ENCODE measurements at regions of chr14 and their contacts with region 1.

Region 1: DNA sequence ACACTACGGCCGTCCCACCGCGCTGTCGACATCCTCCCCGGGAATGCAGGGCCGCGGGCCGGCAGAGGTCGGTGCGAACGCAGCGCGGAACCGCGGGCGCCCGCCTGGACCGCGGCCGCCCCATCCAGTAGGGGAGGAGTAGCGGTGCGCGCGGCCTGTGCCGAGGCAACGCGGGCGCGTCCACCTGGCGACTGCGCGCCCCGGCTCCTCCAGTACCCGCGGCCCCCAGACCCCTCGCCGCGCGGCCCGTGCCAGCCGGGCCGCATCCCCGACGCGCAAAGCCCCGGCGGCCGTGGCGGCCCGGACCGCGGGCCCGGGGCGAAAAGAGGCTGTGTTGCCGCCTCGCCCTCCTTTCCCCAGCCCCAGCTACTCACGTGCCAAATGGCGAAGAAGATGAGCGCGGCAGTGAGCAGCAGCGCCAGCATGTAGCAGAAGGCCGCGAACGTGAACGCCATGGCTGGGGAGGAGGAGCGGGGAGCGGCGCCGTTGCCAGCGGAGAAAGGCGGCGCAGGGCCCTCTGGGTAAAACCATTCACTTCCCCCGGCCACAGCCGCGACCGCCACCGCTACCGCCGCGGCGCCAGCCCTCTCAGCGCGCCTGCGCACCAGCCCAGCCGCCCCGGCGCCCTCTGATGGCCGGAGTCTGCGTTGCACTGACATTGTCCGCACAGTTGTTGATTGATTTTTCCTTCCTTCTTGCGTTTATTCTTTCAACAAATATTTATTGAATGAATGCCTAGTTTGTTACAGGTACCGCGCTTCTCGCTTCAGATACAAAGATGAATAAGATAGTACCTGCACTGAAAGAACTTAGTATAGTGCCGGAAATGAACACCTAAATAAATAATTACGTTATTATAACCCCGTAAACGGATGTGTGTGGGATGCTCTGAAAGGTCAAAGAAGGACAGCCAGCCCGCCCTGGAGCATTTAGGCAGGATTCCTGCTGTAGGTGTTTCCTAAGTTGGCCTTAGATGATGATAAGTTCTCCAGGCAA is at the start of gene CNIH1:
- DNase-seq: peak; percentile 99
- H3K4me3 Mint-ChIP-seq: peak within 1 kb of the TSS; percentile 95
- H3K27ac Mint-ChIP-seq: peak within 1 kb of the TSS; percentile 94
- H3K4me1 Mint-ChIP-seq: peaks cover 42% of the 10 kb centered on the region
- H3K27me3 Mint-ChIP-seq: peaks cover 2% of the 10 kb centered on the region
- total RNA-seq, gene CNIH1: 113 and 116 TPM in 2 replicates

Region 2: DNA sequence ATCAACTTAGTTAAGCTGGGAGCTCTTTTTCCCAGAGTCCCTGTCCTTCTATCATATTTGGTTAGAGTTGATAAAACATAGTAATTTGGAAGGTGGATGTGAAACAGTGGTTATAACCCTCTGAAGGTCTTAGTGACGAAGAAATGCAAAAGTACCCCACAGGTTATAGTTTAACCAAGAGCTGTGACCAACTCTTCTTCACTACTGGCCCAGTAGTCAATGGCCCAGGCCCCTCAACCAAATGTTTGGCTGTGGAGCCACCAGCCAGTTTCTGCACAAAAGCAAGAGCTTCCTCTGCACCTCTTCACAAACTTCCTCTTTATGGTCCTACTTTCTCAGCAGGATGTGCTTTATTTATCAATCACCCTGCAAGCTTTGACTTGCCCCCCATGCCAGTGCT is 617.1 kb before region 1 on chr14:
- intact Hi-C with region 1: no loop called
- DNase-seq: no peak
- H3K4me3 Mint-ChIP-seq: no peak overlapping the region
- H3K27ac Mint-ChIP-seq: no peak overlapping the region
- H3K4me1 Mint-ChIP-seq: no peaks in the 10 kb centered on the region
- H3K27me3 Mint-ChIP-seq: no peaks in the 10 kb centered on the region

Region 3: GRCh38 chr14:54396493-54397335 is 44.5 kb before region 1 on chr14 and contains the start of gene CDKN3:
- intact Hi-C with region 1: loop called (anchors 1 kb)
- DNase-seq: peak; percentile 100
- H3K4me3 Mint-ChIP-seq: peak within 1 kb of the TSS; percentile 92
- H3K27ac Mint-ChIP-seq: peak within 1 kb of the TSS; percentile 86
- H3K4me1 Mint-ChIP-seq: peaks cover 26% of the 10 kb centered on the region
- H3K27me3 Mint-ChIP-seq: peaks cover under 1% of the 10 kb centered on the region
- total RNA-seq, gene CDKN3: 42.5 and 50.8 TPM in 2 replicates

Region 4: GRCh38 chr14:54427871-54428270 is 13.3 kb before region 1 on chr14:
- intact Hi-C with region 1: loop called (anchors 1 kb)
- DNase-seq: no peak
- H3K4me3 Mint-ChIP-seq: no peak overlapping the region
- H3K27ac Mint-ChIP-seq: peak overlapping the region; percentile 3
- H3K4me1 Mint-ChIP-seq: peaks cover 20% of the 10 kb centered on the region
- H3K27me3 Mint-ChIP-seq: no peaks in the 10 kb centered on the region

Region 5: DNA sequence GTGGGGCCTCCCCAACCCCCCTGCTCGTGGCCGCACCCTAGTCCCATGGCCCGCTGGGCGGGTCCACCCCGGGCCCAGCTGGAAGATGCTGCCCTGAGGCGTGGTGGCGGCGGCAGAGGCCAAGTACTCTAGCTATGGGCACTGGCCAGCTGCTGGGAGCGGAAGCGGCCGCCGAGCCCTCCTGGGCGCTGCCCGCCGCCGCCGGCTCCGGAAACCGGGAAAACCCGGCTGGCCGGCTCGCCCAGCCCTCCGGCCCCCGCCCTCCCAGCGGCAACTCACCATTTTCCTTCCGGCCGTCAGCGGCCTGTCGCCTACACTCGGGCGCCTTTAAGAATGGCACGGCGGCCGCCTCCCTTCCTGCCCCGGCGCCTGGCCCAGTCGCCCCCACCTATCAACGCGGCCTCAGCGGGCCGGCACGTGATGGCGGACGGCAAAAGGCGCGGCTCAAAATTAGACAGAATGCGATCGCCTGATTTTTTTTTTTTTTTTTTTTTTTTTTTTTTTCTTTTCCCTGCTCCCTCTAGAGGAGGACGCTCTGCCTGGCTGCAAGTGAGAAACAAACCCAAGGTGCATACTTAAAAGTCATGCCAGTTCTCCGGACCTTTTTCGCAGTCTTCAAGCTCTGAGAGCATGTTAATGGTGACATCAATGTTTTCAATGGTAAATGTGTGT is 47.6 kb after region 1 on chr14 and contains the start of gene GMFB:
- intact Hi-C with region 1: loop called (anchors 1 kb)
- DNase-seq: peak; percentile 96
- H3K4me3 Mint-ChIP-seq: peak within 1 kb of the TSS; percentile 89
- H3K27ac Mint-ChIP-seq: peak within 1 kb of the TSS; percentile 86
- H3K4me1 Mint-ChIP-seq: peaks cover 47% of the 10 kb centered on the region
- H3K27me3 Mint-ChIP-seq: peaks cover 3% of the 10 kb centered on the region
- total RNA-seq, gene GMFB: 40.9 and 41.1 TPM in 2 replicates

Region 6: DNA sequence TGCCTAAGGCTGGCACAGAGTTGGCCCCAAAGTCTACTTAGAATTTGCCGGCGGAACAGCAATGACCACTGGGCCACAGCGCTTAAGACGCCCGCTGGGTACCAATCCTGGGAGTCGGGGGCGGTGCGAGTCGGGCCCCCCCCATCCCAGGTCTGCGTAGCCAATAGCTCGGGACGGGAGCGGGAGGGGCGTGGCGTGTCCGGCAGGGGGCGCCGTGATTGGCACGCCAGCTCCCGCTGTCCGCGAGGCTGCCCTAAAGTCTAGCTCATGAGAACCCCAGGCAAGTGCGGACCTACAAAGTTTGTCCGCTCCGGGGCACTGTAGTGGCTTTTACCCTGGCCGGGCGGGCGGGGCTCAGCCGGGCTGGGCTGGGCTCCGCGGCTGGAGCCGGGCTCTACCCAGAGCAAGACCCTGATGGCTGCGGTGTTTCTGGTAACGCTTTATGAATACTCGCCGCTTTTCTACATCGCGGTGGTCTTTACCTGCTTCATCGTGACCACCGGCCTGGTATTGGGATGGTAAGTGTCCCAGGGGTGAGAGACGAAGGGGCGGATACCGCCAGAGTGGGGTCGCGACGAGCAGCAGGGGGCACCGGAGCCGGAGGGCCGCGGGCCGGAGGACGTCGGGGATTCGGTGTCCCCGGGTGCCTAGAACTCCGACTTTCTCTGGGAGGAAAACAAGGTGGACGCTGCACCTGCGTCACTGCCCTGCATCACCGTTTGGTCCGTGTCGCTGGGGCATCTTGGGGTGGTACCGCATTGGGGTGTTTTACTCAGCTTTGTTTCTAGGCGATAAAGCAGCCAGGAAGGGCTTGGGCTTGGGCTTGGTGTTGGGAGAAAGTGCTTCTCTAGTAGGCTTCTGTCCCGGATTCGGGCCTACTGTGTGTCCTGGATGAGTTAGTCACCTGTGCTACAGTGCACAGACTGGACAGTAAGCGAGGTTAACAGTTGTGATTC is 68.7 kb after region 1 on chr14 and contains the start of gene CGRRF1:
- intact Hi-C with region 1: loop called (anchors 1 kb)
- DNase-seq: peak; percentile 99
- H3K4me3 Mint-ChIP-seq: peak within 1 kb of the TSS; percentile 96
- H3K27ac Mint-ChIP-seq: peak within 1 kb of the TSS; percentile 88
- H3K4me1 Mint-ChIP-seq: peaks cover 29% of the 10 kb centered on the region
- H3K27me3 Mint-ChIP-seq: peaks cover 8% of the 10 kb centered on the region
- total RNA-seq, gene CGRRF1: 7.8 and 11.9 TPM in 2 replicates

Region 7: GRCh38 chr14:54737132-54737711 is 296.1 kb after region 1 on chr14:
- intact Hi-C with region 1: loop called (anchors 1 kb)
- DNase-seq: no peak
- H3K4me3 Mint-ChIP-seq: peak overlapping the region; percentile 63
- H3K27ac Mint-ChIP-seq: peak overlapping the region; percentile 76
- H3K4me1 Mint-ChIP-seq: peaks cover 57% of the 10 kb centered on the region
- H3K27me3 Mint-ChIP-seq: peaks cover 5% of the 10 kb centered on the region

Region 8: GRCh38 chr14:55102141-55102621 is 661.0 kb after region 1 on chr14:
- intact Hi-C with region 1: no loop called
- DNase-seq: peak; percentile 84
- H3K4me3 Mint-ChIP-seq: peak overlapping the region; percentile 73
- H3K27ac Mint-ChIP-seq: peak overlapping the region; percentile 94
- H3K4me1 Mint-ChIP-seq: peaks cover 46% of the 10 kb centered on the region
- H3K27me3 Mint-ChIP-seq: no peaks in the 10 kb centered on the region

Region 9: GRCh38 chr14:55333711-55334485 is 892.7 kb after region 1 on chr14:
- intact Hi-C with region 1: loop called (anchors 10 kb)
- DNase-seq: no peak
- H3K4me3 Mint-ChIP-seq: peak overlapping the region; percentile 77
- H3K27ac Mint-ChIP-seq: peak overlapping the region; percentile 87
- H3K4me1 Mint-ChIP-seq: peaks cover 68% of the 10 kb centered on the region
- H3K27me3 Mint-ChIP-seq: no peaks in the 10 kb centered on the region